GM10248 (cell line): ENCODE measurements at regions of chr1 and their contacts with region 1.

Region 1: DNA sequence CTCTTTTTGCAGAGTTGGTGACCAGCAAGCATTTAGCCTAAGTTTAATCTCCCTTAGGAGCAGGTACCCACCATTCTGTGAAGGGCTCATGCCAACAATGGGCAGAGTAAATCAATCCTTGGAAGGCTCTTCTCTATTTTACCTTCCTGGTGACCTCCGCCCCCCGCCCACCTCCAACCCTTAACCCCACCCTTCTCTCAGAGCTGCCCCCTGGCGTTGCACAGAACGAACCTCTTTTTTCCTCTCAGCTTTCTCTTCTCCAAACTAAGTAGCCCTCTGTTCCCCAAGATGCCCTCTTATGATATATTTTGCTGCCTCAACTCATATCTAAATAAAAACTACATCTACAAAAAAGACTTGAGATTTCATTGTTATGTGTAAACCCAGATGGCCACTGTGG is 186.8 kb downstream of the SEC16B start:
- DNase-seq: no peak
- CTCF ChIP-seq: no peak

Region 2: GRCh38 chr1:177377866-177378265 is 405.2 kb before region 1 on chr1:
- CTCF ChIA-PET with region 1: no interaction called
- POLR2A ChIA-PET with region 1: no interaction called
- DNase-seq: no peak
- CTCF ChIP-seq: no peak

Region 3: DNA sequence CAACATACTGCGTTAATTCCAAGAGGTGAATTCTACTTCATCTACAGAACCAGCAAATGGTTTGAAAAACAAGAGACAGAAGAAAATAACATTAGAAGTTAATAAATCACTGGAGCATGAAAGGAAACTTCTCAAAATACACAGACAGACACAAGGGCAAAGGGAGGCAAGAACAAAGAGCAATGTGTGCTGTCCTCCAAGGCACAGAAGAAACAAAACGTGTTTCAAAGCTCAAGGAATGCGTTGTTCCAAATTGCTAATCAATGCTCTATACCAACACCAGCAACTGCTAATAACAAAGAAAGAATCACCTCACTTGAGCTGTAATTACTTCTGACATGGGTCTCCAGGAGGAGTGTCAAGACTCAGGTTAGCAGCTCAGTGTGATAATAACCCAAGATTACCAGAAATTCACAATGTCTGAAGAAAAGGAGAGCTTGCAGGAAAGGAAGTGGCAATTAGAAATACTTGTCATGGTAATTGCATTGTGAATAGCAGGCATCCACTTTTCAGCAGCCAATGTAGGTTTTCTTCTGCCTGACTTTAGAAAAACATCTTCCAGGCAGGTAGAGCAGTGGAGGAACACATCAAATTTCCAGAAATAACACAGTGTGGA is 11.4 kb after region 1 on chr1:
- CTCF ChIA-PET with region 1: interaction called, 16 read pairs
- POLR2A ChIA-PET with region 1: no interaction called
- DNase-seq: no peak
- CTCF ChIP-seq: no peak

Region 4: GRCh38 chr1:177838892-177839291 is 55.8 kb after region 1 on chr1:
- CTCF ChIA-PET with region 1: no interaction called
- POLR2A ChIA-PET with region 1: no interaction called
- DNase-seq: no peak
- CTCF ChIP-seq: no peak

Region 5: DNA sequence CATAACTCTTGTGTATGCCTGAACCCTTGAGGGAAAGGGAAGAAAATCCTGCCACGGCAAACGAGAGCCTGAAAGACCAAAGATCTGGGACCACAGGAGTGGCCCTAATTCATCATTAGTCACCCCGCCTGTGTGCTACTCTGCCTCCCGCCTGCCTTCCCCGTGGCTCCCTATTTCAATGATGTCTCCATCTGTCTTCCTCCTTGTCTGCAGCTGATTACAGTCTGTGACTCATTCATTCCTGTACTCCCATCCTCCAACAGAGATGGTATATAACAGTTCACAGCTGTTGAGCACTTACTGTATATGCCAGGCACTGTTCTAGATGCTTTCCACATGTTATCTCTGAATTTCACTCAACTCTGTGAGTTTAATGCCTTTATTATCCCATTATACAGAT is 90.2 kb after region 1 on chr1:
- CTCF ChIA-PET with region 1: no interaction called
- POLR2A ChIA-PET with region 1: no interaction called
- DNase-seq: no peak
- CTCF ChIP-seq: no peak

Region 6: GRCh38 chr1:177995368-177995767 is 212.3 kb after region 1 on chr1:
- CTCF ChIA-PET with region 1: no interaction called
- POLR2A ChIA-PET with region 1: no interaction called
- DNase-seq: no peak
- CTCF ChIP-seq: no peak